GM13976 (cell line): ENCODE measurements at regions of chr17 and their contacts with region 1.

Region 1: DNA sequence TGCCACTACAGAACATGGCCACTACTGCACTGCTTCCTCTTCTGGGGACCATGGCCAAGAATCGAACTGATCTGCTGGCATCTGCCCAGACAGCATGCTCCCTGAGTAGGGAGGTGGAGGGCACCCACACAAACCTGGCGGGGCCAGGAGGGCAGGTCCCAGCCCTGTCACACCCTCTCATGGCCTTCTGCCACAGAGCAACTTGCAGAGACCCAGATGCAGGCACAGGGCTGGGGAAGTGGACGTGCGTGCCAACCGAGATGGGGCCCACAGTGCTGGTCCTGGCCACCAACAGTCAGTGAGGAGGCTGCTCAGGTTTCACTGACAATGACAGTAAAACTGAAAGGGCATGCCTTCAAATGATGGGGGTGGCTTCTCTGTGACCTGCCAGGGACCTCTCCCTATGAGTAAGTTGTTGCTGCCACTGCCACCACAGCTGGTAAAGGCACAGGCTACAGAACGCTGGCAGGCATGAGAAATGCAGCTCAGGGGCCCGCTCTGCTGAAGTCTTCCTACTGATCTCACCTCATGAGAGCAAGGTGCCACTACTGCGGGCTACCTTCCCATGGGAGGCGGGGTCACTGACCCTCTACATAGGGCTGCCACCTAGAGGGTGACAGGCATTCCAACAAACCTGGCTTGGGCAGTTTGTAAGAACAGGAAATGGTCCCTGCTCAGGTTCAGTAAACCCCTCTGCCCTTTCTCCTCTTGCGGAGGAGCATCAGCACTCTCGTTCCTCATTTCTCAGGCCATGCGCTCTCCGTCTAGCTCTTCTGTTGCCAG is 15.5 kb downstream of the HIC1 start:
- DNase-seq: peak; percentile 83
- CTCF ChIP-seq: no peak

Region 2: GRCh38 chr17:1709971-1710806 is 360.2 kb before region 1 on chr17 and contains the start of gene TLCD2:
- in situ Hi-C with region 1: no loop called
- DNase-seq: peak; percentile 62
- CTCF ChIP-seq: no peak

Region 3: DNA sequence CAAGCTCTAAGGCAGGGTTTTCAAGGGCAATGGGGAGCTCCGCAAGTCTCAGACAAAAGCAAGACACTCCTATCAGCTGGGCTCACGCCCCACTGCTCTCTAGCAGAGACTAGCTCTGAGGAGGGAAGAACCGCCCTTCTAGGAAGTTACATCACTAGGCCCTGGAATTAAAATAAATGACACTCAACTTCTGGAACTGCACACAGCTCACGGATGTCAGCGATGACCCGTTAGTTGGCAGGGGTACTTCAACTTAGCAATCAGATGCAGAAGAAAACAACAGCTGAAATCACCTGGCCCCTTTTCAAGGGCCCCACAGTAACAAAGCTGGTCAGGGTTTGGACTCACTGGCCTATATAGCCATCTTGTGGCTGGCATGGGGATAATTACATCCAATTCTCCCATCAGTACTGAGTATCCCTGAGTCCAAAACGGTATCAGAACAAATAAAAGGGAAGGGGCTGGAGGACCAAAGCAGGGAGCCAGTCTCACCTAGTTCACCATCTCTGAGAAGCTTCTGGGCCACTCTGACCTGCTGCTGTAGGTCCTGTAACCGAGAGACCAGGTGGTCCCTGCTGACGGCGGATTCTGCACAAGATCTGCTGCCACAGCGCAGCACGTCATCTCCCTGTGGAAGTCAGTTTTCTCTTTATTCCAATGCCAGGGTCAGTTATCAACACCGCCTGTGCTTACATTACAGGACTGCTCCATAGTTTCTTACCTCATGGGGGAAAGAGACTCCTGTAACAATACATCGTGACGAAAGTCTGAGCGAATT is 286.4 kb before region 1 on chr17:
- in situ Hi-C with region 1: no loop called
- DNase-seq: peak; percentile 62
- CTCF ChIP-seq: no peak

Region 4: DNA sequence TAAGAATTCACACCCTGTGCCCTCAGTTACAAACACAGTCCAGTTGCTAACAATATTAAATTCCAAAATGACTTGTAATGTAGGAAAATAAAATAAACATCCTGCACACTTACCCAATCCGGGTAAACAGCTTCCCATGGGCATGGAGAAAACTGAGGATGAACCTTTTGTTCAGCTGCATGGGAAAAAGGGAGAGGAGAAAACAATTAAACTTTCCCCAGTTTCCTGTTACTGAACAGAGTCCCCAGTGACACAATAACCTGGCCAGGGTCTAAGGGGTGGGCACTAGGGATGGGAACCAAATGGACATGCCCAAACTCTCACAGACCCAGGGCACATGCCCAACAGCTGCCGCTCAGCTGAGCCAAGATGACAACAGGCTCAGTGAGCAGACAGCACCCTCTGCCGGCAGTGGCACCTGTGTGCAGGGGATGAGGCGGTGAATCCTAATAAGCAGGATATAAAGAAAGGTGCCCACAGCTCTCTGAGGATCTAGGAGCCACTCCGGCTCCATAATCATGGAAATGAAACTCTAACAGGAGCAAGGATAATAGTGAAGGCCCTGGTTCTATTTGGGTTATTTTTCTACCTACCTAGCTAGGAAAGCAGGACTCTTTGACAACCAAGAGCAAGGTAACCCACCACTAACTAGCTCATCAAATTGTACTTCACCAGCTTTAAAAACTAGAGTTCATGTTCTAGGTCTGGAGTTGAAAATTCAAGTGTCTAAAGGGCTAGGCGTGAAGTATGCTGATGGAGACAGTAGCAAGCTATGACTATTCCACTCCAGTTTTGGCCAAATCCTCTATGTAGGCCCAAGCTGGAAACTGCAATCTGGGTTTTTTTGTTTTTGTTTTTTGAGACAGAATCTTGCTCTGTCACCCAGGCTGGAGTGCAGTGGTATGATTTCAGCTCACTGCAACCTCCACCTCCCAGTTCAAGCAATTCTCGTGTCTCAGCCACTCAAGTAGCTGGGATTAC is 174.4 kb after region 1 on chr17:
- in situ Hi-C with region 1: loop called (anchors 5 kb)
- DNase-seq: peak; percentile 79
- CTCF ChIP-seq: peak; percentile 98